ENCODE measurements at regions of chr2 and their contacts with region 1.

Region 1: DNA sequence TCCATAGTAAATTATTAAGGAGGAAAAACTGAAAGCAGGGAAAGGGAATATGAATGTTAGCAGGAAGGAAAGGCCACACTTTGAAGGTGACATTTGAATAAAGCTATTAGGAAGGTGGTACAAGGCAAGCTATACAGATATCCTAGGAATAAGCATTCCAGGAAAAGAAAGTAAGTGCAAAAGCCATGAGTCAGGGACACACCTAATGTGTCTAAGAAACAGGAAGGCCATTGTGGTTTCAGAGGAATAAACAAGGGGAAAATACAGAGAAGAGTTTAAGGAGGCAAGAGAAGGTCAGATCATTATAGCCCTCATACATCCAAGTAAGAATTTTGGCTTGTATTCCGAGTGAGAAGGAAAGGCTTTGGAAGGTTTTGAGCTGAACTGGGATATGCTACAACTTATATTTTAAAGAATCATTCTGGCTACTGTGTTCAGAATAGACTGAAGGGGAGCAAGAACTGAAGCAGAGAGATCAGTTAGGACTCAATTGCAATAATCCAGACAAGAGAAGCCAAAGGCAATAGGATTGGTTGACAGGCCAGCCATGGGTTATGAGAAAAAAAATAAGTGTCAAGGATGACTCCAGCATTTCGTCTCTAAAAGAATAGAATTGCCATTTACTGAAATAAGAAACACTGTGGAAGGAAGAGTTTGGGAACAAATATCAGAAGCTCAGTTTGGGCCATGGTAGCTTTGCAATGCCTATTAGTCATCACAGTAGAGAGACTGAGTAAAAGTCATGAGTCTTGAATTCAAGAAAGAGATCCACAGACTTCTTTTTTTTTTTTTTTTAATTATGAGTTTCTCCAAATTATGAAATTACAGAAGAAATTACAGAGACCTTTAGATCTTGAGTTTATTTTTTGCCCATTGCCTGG is 11.3 kb downstream of the RAD51AP2 start:
- DNase-seq: no peak
- ATAC-seq: no peak
- H3K4me3 ChIP-seq: no peak overlapping the region
- H3K27ac ChIP-seq: no peak overlapping the region
- H3K4me1 ChIP-seq: no peaks in the 10 kb centered on the region
- H3K27me3 ChIP-seq: no peaks in the 10 kb centered on the region

Region 2: GRCh38 chr2:17190527-17190926 is 316.4 kb before region 1 on chr2:
- intact Hi-C with region 1: no loop called
- DNase-seq: no peak
- ATAC-seq: no peak
- H3K4me3 ChIP-seq: no peak overlapping the region
- H3K27ac ChIP-seq: no peak overlapping the region
- H3K4me1 ChIP-seq: no peaks in the 10 kb centered on the region
- H3K27me3 ChIP-seq: no peaks in the 10 kb centered on the region

Region 3: DNA sequence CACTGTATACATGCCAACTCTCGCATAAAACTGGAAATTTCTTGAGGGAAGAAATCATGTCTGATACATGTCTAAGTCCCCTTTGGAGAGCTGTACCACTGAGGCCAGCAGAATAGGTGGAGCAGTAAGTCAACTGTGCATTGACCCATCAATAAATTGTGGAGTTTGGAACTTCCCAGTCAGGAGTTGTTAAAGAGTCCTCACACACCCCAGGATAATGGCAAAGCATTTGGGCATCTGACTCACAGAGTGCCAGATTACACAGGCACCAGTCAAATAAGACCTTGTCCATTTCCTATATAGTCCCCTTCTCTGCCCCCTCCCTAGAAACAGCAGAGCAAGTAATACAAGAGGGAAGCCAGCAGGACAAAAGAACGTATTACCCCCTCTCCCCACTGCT is 43.9 kb after region 1 on chr2:
- intact Hi-C with region 1: loop called in 1 of 2 experiments (anchors 5 kb)
- DNase-seq: no peak
- ATAC-seq: no peak
- H3K4me3 ChIP-seq: no peak overlapping the region
- H3K27ac ChIP-seq: no peak overlapping the region
- H3K4me1 ChIP-seq: no peaks in the 10 kb centered on the region
- H3K27me3 ChIP-seq: no peaks in the 10 kb centered on the region